Ovary (tissue), 10 donors: ENCODE measurements at regions of chr16 and their contacts with region 1.

Region 1: GRCh38 chr16:2791174-2791573 is 3.8 kb upstream of the PRSS33 start:
- DNase-seq: peak in 1 of 5 donors; percentile 7
- H3K4me3 ChIP-seq: no peak overlapping the region
- H3K27ac ChIP-seq: no peak overlapping the region
- H3K4me1 ChIP-seq: no peaks in the 10 kb centered on the region
- H3K27me3 ChIP-seq: no peaks in the 10 kb centered on the region
- CTCF ChIP-seq: no peak
- EP300 ChIP-seq: no peak
- POLR2A ChIP-seq: no peak

Region 2: DNA sequence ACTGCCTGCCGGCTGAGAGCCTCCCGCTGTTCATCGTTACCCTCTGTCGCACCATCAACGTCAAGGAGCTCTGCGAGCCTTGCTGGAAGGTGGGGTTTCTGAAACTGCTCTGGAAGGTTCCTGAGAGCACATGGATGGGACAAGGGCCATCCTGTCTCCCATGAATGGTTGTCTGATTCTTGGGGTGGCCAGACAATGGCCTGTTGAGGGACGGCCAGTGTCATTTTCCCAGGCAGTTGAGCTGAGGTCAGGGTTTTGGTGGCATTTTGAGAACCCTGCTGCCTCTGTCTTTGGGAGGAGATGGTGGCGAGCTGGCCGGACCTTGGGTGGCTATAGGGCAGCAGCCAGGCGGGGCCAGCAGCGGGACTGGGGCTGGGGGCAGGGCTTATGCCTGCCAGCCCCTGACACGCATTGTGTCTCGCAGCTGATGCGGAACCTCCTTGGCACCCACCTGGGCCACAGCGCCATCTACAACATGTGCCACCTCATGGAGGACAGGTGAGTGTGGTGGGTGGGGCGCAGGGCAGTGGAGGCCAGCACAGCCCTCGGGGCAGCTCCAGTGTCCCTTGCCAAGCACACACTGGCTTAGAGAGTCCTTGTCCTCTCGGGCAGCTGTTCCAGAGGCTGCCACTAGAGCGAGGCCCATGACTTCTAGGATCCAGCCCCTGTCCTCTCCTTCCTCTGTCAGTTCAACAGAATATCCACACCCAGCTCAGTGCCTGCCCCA is 734.3 kb before region 1 on chr16:
- intact Hi-C with region 1: no loop called
- DNase-seq: no peak
- H3K4me3 ChIP-seq: no peak overlapping the region
- H3K27ac ChIP-seq: no peak overlapping the region
- H3K4me1 ChIP-seq: no peaks in the 10 kb centered on the region
- H3K27me3 ChIP-seq: no peaks in the 10 kb centered on the region
- CTCF ChIP-seq: no peak
- EP300 ChIP-seq: no peak
- POLR2A ChIP-seq: no peak

Region 3: DNA sequence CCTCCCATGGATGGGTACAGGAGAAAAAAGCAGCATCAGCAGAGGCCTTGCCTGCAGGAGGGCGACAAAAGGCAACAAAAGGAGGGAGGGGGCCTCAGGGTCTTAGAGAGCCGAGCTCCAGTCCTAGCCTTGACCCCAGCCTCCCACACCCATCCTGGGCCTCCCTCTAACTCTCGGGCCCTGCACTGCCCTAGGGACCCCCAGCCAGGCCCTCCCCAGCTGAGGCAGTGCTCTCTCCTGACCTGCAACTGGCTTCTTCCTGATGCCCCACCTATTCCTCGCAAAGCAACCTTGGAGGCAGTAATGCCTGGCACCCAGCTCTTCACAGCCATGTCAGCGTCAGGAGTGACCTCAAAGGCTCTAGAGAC is 54.0 kb before region 1 on chr16:
- intact Hi-C with region 1: loop called in 1 of 4 experiments (anchors 2 kb)
- DNase-seq: no peak
- H3K4me3 ChIP-seq: no peak overlapping the region
- H3K27ac ChIP-seq: no peak overlapping the region
- H3K4me1 ChIP-seq: no peaks in the 10 kb centered on the region
- H3K27me3 ChIP-seq: no peaks in the 10 kb centered on the region
- CTCF ChIP-seq: no peak
- EP300 ChIP-seq: no peak
- POLR2A ChIP-seq: no peak